HEK293 (cell line): ENCODE measurements at regions of chrX and their contacts with region 1.

Region 1: DNA sequence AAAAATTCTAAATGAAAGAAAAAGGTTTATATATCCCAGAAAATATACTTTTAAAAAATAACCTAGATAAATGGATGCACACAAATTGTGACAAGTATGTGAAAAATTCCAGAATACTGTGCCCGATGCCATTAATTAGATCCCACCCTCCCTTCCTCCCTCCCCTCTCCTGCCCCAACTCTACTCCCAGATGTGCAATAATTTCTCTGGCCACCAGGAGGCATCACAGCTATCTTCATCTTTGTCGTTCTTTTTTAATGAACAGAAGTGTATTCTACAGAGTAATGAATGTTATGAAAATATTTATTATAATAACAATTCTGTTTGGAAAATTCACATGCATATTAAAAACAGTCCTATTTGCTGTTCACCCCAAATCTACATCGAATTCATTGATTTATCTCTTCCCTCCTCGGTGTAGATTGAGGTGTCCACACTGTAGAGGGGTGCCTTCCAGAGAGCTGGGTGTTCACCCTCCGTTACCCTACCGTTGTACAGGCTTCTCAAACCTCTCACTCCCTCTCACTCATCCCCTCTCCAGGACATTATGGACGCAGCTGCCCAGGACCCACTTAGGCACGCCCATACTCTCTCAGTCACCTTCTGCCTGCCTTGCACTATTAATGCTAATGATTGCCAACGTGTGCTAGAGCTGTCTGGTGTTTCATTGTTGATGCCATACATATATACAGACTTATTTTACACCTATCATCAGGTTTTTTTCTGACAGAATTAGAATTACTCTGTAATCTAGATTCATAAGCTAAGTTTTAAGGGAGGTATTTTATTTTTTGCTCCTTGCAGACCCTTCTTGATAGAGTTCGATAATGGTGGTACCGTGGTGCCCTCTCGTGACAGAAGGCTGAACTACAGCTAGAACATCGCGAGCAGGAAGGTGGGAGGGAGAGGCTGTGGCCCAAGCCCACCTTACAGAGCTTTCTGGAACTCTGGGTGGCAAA is 14.1 kb downstream of the RAB40AL start:
- H3K4me3 ChIP-seq: peak overlapping the region; percentile 37
- H3K27ac ChIP-seq: no peak overlapping the region
- H3K4me1 ChIP-seq: no peaks in the 10 kb centered on the region
- CTCF ChIP-seq: no peak

Region 2: GRCh38 chrX:102720237-102721168 is 230.7 kb before region 1 on chrX and contains the start of gene GPRASP3:
- CTCF ChIA-PET with region 1: no interaction called
- POLR2A ChIA-PET with region 1: no interaction called
- H3K4me3 ChIP-seq: peak within 1 kb of the TSS; percentile 44
- H3K27ac ChIP-seq: no peak within 1 kb of the TSS
- H3K4me1 ChIP-seq: no peaks in the 10 kb centered on the region
- CTCF ChIP-seq: no peak

Region 3: DNA sequence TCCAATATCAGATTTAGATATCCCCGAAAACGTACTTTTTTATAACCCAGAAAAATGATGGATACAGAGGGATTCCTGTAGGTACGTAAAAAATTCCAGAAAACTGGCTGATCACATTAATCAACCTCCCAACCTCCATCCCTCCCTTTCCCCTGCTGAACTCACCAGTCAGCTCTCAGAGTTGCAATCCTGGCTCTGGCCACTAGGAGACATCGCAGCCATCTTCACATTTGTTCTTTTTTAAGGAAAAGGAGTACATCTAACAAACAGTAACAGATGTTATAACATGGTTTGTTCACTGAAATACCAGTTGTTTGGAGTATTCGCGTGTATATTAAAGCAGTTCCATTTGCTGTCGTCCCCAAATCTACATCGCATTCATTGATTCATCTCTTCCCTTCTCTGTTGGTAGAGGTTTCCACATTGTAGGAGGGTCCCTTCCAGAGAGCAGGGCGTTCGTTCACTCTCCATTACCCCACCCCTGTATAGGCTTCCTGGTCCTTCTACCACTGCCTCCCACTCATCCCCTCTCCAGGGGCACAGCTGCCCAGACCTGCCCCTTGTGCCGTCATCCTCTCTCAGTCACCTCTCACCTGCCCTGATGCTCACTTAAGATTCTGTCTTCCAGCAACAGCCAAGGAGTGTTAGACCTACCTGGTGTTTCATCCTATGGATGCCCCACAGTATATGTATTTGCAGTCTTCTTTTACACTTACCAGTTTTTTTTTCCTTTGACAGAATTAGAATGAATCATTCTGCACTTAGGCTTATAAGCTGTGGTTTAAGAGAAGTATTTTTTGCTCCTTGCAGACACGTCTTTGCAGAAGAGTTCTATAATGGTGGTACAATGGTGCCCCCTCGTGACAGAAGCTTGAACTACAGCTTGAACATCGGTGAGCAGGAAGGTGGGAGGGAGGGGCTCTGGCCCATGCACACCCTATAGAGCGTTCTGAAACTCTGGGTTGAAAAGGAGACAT is 51.0 kb before region 1 on chrX:
- CTCF ChIA-PET with region 1: interaction called, 18 read pairs
- POLR2A ChIA-PET with region 1: no interaction called
- H3K4me3 ChIP-seq: no peak overlapping the region
- H3K27ac ChIP-seq: no peak overlapping the region
- H3K4me1 ChIP-seq: no peaks in the 10 kb centered on the region
- CTCF ChIP-seq: no peak

Region 4: DNA sequence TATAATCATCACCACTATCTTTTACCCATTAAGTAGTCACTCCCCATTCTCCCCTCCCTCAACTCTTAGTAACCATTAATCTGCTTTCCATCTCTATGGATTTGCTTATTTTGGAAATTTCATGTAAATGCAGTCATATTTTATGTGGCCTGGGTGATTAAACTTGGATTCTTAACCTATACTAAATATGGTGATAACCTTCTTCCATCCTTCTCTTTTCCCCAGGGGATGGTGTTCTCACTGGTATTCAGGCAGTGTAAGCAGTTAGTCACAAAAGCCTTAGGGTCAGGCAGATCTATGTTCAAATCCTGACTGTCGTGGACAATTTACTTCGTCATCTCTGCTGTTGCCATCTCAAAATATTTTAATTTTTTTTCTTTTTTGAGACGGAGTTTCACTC is 15.5 kb after region 1 on chrX:
- CTCF ChIA-PET with region 1: interaction called, 60 read pairs
- POLR2A ChIA-PET with region 1: no interaction called
- H3K4me3 ChIP-seq: no peak overlapping the region
- H3K27ac ChIP-seq: no peak overlapping the region
- H3K4me1 ChIP-seq: no peaks in the 10 kb centered on the region
- CTCF ChIP-seq: no peak

Region 5: DNA sequence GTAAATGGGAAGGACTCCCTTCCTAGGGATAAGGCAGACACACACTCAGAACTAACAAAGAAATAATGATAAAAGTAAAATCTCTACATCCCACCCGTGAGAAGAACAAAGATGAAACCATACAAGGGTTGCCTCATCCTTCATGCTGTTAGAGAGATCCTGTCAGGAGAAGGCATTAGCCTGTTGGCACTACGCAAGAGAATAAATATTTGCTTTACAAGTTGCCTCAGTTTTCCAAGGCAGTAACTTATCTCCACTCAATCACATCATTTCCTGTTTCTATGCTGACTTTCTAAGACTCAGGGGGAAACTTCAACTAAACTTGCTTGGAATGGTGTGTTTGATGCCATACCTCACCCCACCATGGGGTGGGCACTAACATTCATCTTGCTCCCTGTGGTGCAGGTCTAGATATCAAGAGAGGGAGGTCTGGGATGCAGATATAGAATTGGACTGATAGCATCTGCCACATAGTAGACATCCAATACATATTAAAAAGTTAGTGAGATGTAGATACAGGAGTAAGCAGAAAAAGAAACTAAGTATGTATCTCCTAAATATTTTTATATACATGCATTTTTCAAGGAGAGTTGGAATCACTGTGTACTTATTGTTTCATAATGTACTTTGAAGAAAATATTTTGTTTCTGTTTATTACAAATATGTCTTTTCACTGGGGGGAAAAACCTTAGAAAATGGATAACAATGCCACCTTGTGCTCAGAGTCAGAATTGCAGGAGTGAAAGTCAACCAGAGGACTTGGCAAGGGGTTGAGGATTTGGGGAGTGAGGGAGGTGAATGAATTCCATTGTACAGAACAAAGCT is 206.5 kb after region 1 on chrX:
- CTCF ChIA-PET with region 1: interaction called, 38 read pairs
- POLR2A ChIA-PET with region 1: no interaction called
- H3K4me3 ChIP-seq: no peak overlapping the region
- H3K27ac ChIP-seq: no peak overlapping the region
- H3K4me1 ChIP-seq: no peaks in the 10 kb centered on the region
- CTCF ChIP-seq: no peak

Region 6: DNA sequence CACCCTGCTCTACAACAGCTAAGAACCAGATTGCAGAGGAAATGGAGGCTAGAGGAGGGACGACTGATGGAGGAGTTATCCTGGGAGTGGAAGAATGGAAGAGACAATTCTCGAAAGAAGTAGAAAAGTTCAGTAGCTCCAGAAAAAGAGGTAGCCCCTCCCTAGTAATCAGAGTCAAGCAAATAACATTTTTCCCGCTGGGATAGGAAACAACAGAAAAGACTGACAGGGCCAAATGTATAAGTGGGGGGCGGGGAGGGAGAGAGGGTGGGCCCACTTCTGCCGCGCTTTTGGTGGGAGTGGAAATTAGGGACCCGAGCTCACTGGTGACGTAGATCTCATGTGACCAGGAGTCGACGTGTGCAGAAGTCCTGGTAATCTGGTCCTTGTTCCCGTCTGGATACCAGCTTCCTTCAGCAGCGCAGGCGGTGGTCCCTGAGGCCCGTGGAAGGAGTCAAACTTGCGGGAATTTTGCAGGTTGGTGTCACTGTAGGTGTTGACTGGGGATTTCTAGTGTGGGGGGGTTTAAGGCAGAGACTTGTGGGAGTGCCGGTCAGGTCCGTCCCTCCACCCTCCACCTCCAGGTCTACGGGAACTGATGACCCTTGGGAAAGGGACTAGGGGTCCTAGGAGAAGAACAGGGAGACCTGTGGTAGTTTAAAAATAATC is 405.1 kb after region 1 on chrX and contains the start of gene TCEAL9:
- CTCF ChIA-PET with region 1: no interaction called
- POLR2A ChIA-PET with region 1: no interaction called
- H3K4me3 ChIP-seq: peak within 1 kb of the TSS; percentile 59
- H3K27ac ChIP-seq: peak within 1 kb of the TSS; percentile 53
- H3K4me1 ChIP-seq: no peaks in the 10 kb centered on the region
- CTCF ChIP-seq: no peak

Region 7: GRCh38 chrX:103488332-103488731 is 537.1 kb after region 1 on chrX:
- CTCF ChIA-PET with region 1: interaction called, 10 read pairs
- POLR2A ChIA-PET with region 1: no interaction called
- H3K4me3 ChIP-seq: no peak overlapping the region
- H3K27ac ChIP-seq: no peak overlapping the region
- H3K4me1 ChIP-seq: no peaks in the 10 kb centered on the region
- CTCF ChIP-seq: no peak